ENCODE measurements at regions of chr1 and their contacts with region 1.

Region 1: GRCh38 chr1:169546087-169546995 is 39.9 kb downstream of the F5 start:
- H3K4me3 ChIP-seq: no peak overlapping the region
- H3K27ac ChIP-seq: no peak overlapping the region
- H3K4me1 ChIP-seq: no peaks in the 10 kb centered on the region
- CTCF ChIP-seq: peak; percentile 38; the same call in 1 of the 2 replicates

Region 2: GRCh38 chr1:169466259-169467230 is 79.8 kb before region 1 on chr1:
- CTCF ChIA-PET with region 1: interaction called, 28 read pairs
- POLR2A ChIA-PET with region 1: no interaction called
- H3K4me3 ChIP-seq: no peak overlapping the region
- H3K27ac ChIP-seq: no peak overlapping the region
- H3K4me1 ChIP-seq: no peaks in the 10 kb centered on the region
- CTCF ChIP-seq: 0 out of 2 replicates have a peak, but pooled peaks have one; percentile 26

Region 3: GRCh38 chr1:169473352-169473751 is 73.0 kb before region 1 on chr1:
- CTCF ChIA-PET with region 1: interaction called, 10 read pairs
- POLR2A ChIA-PET with region 1: no interaction called
- H3K4me3 ChIP-seq: no peak overlapping the region
- H3K27ac ChIP-seq: no peak overlapping the region
- H3K4me1 ChIP-seq: no peaks in the 10 kb centered on the region
- CTCF ChIP-seq: no peak

Region 4: GRCh38 chr1:169572187-169572586 is 25.8 kb after region 1 on chr1:
- CTCF ChIA-PET with region 1: no interaction called
- POLR2A ChIA-PET with region 1: no interaction called
- H3K4me3 ChIP-seq: no peak overlapping the region
- H3K27ac ChIP-seq: no peak overlapping the region
- H3K4me1 ChIP-seq: peaks cover 5% of the 10 kb centered on the region; the same call in 1 of the 2 replicates
- CTCF ChIP-seq: no peak

Region 5: GRCh38 chr1:169618367-169618766 is 72.0 kb after region 1 on chr1:
- CTCF ChIA-PET with region 1: no interaction called
- POLR2A ChIA-PET with region 1: no interaction called
- H3K4me3 ChIP-seq: no peak overlapping the region
- H3K27ac ChIP-seq: no peak overlapping the region
- H3K4me1 ChIP-seq: no peaks in the 10 kb centered on the region
- CTCF ChIP-seq: no peak

Region 6: DNA sequence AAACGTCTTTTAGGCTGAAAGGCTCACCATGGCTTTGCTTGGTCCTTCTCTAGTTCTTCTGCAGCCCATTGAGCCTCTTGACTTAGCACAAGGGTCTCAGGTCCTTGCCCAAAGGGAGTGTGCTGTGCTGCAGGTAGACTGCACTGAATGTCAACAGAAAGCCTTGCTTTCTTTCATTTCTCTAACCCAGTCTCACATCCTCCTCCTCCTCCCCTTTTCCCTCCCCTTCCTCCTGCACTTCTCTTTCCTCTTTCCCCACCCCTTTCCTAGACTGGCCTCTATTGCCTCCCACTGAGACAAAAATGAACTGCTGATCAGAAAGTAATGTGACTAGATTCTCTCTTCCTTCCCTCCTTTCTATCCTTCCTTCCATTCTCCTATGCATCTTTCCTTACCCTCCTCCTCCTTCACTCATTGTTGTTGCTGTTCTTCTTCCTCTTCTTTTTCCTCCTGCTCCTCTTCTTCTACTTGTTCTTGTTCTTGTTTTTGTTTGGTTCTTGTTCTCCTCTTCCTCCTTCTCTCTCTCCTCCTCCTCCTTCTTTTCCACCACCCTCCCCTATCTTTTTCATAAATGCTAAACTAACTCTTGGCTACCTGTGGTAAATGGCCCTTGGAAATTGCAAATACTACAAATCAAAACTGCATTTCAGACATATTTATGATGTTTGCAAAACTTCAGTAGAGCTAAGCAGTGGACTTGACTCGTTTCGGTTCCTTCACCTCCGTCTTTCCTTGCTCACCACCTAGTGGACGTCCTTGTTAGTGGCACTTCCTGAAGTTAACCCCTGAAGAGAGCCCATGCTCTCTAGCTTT is 165.3 kb after region 1 on chr1 and contains the start of gene SELL:
- CTCF ChIA-PET with region 1: interaction called, 17 read pairs
- POLR2A ChIA-PET with region 1: no interaction called
- H3K4me3 ChIP-seq: peak within 1 kb of the TSS; percentile 26
- H3K27ac ChIP-seq: no peak within 1 kb of the TSS
- H3K4me1 ChIP-seq: no peaks in the 10 kb centered on the region
- CTCF ChIP-seq: peak; percentile 42

Region 7: DNA sequence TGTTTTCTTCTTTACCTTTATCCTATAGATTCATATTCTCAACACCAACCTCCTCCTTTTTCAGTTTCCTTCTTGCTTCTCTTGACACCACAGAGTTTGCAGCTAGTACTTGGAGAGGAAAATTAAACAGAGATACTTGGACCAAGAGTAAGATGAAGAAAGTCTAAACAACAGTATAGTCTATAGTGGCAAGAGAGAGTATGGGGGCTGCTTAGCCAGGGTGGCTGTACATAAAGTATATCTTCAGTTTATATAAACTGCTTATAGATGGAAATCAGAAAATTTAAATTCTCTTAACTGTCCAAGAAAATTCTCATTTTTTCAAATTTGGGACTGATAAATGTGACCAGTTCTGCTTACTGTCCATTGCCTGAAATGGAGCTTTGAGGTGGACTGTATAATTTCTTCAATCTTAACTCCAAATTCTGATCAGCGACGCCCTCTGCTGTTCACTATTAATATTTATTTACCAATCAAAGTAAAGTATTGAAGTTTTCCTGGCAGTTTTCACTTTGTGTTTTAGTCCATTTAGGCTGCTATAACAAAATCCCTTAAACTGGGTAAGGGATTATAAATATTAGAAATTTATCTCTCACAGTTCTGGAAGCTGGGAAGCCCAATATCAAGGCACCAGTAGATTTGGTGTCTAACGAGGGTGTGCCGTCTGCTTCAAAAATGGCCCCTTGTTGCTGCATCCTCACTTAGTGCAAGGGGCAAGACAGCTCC is 263.2 kb after region 1 on chr1:
- CTCF ChIA-PET with region 1: interaction called, 43 read pairs
- POLR2A ChIA-PET with region 1: no interaction called
- H3K4me3 ChIP-seq: no peak overlapping the region
- H3K27ac ChIP-seq: no peak overlapping the region
- H3K4me1 ChIP-seq: no peaks in the 10 kb centered on the region
- CTCF ChIP-seq: no peak

Measured in HEK293 (cell line).